Activated CD4-positive, alpha-beta memory T cell treated with anti-CD3 and anti-CD28 coated beads, Interleukin-2, amount 10 ng/mL, durations not matched to agents 7 days and 5 days (primary cell): ENCODE measurements at regions of chr1 and their contacts with region 1.

Region 1: DNA sequence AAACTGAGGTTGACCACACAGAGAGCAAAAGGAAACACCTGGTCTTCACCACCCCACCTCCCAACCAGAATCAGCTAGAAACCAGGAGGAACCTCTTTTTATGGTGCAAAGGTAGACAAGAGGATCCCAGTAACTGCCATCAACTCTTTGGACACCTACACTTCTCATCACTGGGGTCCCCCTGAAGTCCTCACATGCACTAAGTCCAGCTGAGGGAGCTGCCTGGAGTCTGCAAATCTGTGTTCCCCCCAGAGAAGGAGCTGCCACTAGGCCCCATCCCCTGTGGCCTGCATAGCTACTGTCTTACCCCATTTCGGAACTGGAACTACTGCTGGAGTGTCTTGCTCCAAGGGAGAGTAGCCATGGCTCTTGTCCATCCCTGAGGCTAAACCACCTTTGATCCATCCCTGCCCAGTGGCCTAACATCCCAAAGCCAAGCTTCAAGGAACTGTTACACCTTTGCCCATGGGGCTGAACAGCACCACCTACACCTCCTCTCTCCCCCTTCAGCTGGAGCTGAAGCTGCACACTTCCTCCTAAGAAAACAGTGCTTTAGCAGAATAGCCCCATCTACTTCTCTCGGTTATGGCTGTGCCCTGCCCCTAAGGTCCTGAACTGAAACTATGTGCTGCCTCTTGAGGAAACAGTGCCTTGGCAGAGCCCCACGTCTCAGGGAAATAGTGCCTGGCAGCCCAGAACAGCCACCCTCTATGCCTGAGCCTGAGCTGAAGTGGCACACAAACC is 85.4 kb upstream of the CD53 start:
- DNase-seq: peak; percentile 73
- H3K4me3 Mint-ChIP-seq: peak overlapping the region; percentile 57
- H3K27ac Mint-ChIP-seq: peak overlapping the region; percentile 93
- H3K4me1 Mint-ChIP-seq: peaks cover 62% of the 10 kb centered on the region
- H3K27me3 Mint-ChIP-seq: peaks cover 3% of the 10 kb centered on the region

Region 2: GRCh38 chr1:110460253-110461220 is 327.0 kb before region 1 on chr1:
- CTCF ChIA-PET with region 1: no interaction called
- POLR2A ChIA-PET with region 1: no interaction called
- DNase-seq: peak; percentile 85
- H3K4me3 Mint-ChIP-seq: no peak overlapping the region
- H3K27ac Mint-ChIP-seq: no peak overlapping the region
- H3K4me1 Mint-ChIP-seq: no peaks in the 10 kb centered on the region
- H3K27me3 Mint-ChIP-seq: no peaks in the 10 kb centered on the region

Region 3: DNA sequence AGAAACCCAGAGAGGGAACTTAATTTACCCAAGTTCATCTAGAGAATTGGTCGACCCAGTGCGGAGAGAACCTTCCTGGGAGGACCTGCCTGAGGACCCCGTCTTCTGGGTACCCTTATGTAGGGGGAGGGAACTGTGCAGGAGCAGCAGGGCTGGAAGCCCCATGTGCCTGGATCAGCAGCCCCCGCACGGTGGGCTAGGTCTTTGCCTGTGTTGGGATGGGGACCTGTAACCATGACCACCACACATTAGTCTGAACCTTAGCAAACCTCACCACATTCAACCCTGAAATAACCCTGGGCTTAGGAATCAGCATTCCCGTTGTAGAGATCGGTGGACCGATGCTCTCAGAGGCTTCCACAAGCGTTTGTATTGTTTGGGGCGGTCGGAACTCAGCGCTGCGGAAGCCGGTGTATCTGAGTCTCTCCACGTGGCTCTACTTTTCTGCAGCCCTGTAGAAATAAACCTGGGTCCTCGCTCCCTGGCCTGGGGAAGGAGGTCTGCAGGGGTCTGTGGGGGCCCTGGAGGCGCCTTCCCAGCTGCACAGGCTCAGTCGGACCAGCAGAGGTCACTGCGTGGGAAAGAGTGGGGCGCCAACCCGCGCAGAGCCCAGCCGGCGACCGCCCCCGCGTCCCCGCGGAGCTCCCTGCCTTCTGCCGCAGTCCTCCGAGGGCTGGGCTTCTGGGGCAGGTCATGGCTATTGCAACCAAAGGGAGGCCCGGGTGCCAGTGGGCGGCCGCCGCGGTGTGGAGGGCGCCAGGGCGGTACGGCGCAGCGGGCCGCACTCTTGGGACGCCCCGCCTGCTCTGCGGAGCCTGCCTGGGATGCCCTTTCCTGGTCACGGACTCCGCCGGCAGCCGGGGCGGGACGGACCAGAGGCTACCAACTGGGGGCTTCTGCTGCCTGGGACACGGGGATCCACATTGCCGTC is 232.4 kb before region 1 on chr1:
- CTCF ChIA-PET with region 1: interaction called, 33 read pairs
- POLR2A ChIA-PET with region 1: no interaction called
- DNase-seq: peak; percentile 54
- H3K4me3 Mint-ChIP-seq: no peak overlapping the region
- H3K27ac Mint-ChIP-seq: no peak overlapping the region
- H3K4me1 Mint-ChIP-seq: peaks cover 12% of the 10 kb centered on the region
- H3K27me3 Mint-ChIP-seq: peaks cover 62% of the 10 kb centered on the region

Region 4: DNA sequence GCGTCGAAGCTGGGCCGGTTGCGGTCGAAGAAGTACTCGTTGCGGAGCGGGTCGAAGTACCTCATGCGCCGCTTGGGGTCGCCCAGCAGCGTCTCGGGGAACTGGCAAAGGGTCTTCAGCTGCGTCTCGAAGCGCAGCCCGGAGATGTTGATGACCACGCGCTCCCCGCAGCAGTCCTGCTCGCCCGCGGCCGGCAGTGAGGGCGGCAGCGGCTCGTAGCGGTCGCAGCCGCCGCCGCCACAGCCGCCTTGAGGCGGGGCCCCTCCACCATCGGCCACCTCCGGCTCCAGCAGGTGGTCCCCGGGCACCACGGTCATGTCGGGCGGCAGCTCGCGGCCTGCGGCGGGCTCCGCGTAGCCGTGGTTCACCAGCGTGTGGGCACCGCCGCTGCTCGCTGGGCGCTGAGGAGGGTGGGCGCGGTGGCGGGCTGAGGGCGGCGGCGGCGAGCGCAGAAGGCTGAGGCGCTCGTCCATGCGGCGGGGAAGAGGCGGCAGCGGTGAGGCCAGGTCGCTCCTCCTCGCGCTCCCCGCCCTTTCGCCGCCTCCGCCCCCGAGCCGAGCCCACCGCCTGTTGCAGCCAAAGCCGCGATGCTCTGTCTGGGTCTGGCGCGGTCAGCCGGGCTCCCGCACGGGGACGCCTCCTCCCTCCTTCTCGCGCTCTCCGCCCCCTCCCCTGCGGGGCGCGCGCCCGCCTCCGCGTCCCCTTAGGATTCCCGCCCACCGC is 113.0 kb before region 1 on chr1 and contains the start of gene KCNA3:
- CTCF ChIA-PET with region 1: interaction called, 10 read pairs
- POLR2A ChIA-PET with region 1: interaction called, 31 read pairs
- DNase-seq: peak; percentile 74
- H3K4me3 Mint-ChIP-seq: peak within 1 kb of the TSS; percentile 100
- H3K27ac Mint-ChIP-seq: peak within 1 kb of the TSS; percentile 89
- H3K4me1 Mint-ChIP-seq: peaks cover 28% of the 10 kb centered on the region
- H3K27me3 Mint-ChIP-seq: no peaks in the 10 kb centered on the region
- total RNA-seq, gene KCNA3: 84.9 to 86.2 TPM

Region 5: DNA sequence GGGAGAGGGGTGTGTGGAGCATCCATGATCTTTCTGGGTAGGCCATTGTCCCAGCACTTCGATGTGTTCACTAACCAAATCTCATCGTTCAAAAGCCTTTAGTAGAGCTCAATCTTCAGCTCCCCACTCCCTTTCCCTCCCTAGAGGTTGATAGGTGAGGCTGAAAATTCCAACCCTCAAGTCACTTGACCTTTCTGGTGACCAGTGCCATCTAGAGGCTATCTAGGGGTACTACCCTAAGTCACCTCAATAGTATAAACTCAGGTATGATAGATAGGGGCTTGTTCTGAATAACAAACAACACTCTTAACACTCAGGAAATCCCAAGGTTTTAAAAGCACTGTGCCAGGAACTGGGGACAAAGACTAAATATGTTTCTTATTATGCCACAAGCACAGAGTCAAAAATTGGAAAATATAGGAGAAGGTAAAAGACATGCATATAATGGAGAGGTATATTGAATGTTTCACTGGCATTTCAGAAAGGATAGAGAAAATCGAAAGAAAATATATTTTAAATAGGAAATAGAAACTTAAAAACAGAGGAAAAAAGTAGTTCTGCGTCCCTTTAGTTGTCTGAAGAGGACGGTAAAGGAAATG is 42.6 kb after region 1 on chr1:
- CTCF ChIA-PET with region 1: interaction called, 39 read pairs
- POLR2A ChIA-PET with region 1: interaction called, 10 read pairs
- DNase-seq: peak; percentile 18
- H3K4me3 Mint-ChIP-seq: no peak overlapping the region
- H3K27ac Mint-ChIP-seq: no peak overlapping the region
- H3K4me1 Mint-ChIP-seq: peaks cover 3% of the 10 kb centered on the region
- H3K27me3 Mint-ChIP-seq: peaks cover 5% of the 10 kb centered on the region

Region 6: DNA sequence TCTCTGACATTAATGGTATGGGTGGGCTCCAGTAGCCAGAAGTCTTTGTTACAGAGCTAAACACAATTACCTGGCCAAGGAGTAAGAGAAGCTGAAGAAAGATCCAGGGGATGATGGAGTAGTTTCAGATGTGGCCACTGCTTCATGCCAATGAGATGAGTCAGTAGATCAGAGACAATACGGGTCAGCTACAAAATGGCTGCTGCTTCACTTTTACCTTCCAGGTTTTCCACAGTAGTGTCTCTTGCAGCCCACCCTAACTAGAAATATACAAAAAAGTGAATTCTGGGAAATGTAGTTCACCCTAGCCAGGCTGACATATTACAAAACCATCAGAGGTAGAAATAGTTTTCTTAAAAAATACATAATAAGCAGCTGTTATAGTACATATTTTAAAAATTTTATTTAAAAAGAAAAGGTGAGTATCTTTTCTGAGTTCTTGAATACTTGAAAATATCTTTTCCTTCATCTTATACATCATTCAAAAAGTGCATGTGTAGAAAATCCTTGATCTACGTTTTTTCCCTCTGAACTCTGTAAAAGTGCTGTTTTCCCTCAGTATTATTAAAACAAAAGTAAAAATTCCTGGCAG is 140.1 kb after region 1 on chr1:
- CTCF ChIA-PET with region 1: no interaction called
- POLR2A ChIA-PET with region 1: no interaction called
- DNase-seq: no peak
- H3K4me3 Mint-ChIP-seq: no peak overlapping the region
- H3K27ac Mint-ChIP-seq: no peak overlapping the region
- H3K4me1 Mint-ChIP-seq: no peaks in the 10 kb centered on the region
- H3K27me3 Mint-ChIP-seq: peaks cover 13% of the 10 kb centered on the region

Region 7: GRCh38 chr1:110963691-110964399 is 176.3 kb after region 1 on chr1 and contains the start of gene LRIF1:
- CTCF ChIA-PET with region 1: interaction called, 3 read pairs
- POLR2A ChIA-PET with region 1: interaction called, 14 read pairs
- DNase-seq: peak; percentile 100
- H3K4me3 Mint-ChIP-seq: peak within 1 kb of the TSS; percentile 85
- H3K27ac Mint-ChIP-seq: peak within 1 kb of the TSS; percentile 98
- H3K4me1 Mint-ChIP-seq: peaks cover 39% of the 10 kb centered on the region
- H3K27me3 Mint-ChIP-seq: peaks cover 14% of the 10 kb centered on the region
- total RNA-seq, gene LRIF1: 25.7 to 26.9 TPM